Activated naive CD4-positive, alpha-beta T cell treated with anti-CD3 and anti-CD28 coated beads for 36 hours (primary cell): ENCODE measurements at regions of chr19 and their contacts with region 1.

Region 1: GRCh38 chr19:17496337-17496997 is 15.0 kb upstream of the PGLS start:
- DNase-seq: peak; percentile 89
- H3K4me3 Mint-ChIP-seq: no peak overlapping the region
- H3K27ac Mint-ChIP-seq: no peak overlapping the region
- H3K4me1 Mint-ChIP-seq: peaks cover 15% of the 10 kb centered on the region
- H3K27me3 Mint-ChIP-seq: no peaks in the 10 kb centered on the region

Region 2: GRCh38 chr19:17479325-17479791 is 17.1 kb before region 1 on chr19:
- CTCF ChIA-PET with region 1: interaction called, 13 read pairs
- intact Hi-C with region 1: no loop called
- DNase-seq: no peak
- H3K4me3 Mint-ChIP-seq: no peak overlapping the region
- H3K27ac Mint-ChIP-seq: no peak overlapping the region
- H3K4me1 Mint-ChIP-seq: no peaks in the 10 kb centered on the region
- H3K27me3 Mint-ChIP-seq: no peaks in the 10 kb centered on the region

Region 3: GRCh38 chr19:17522988-17523872 is 26.8 kb after region 1 on chr19:
- CTCF ChIA-PET with region 1: interaction called, 10 read pairs
- intact Hi-C with region 1: no loop called
- DNase-seq: peak; percentile 83
- H3K4me3 Mint-ChIP-seq: no peak overlapping the region
- H3K27ac Mint-ChIP-seq: peak overlapping the region; percentile 85
- H3K4me1 Mint-ChIP-seq: peaks cover 15% of the 10 kb centered on the region
- H3K27me3 Mint-ChIP-seq: no peaks in the 10 kb centered on the region

Region 4: GRCh38 chr19:17555480-17555928 is 59.0 kb after region 1 on chr19 and contains the start of gene COLGALT1:
- CTCF ChIA-PET with region 1: interaction called, 8 read pairs
- intact Hi-C with region 1: loop called (anchors 5 kb)
- DNase-seq: peak; percentile 99
- H3K4me3 Mint-ChIP-seq: peak within 1 kb of the TSS; percentile 74
- H3K27ac Mint-ChIP-seq: no peak within 1 kb of the TSS
- H3K4me1 Mint-ChIP-seq: peaks cover 16% of the 10 kb centered on the region
- H3K27me3 Mint-ChIP-seq: no peaks in the 10 kb centered on the region
- total RNA-seq, gene COLGALT1: 36.8 to 37.3 TPM

Region 5: DNA sequence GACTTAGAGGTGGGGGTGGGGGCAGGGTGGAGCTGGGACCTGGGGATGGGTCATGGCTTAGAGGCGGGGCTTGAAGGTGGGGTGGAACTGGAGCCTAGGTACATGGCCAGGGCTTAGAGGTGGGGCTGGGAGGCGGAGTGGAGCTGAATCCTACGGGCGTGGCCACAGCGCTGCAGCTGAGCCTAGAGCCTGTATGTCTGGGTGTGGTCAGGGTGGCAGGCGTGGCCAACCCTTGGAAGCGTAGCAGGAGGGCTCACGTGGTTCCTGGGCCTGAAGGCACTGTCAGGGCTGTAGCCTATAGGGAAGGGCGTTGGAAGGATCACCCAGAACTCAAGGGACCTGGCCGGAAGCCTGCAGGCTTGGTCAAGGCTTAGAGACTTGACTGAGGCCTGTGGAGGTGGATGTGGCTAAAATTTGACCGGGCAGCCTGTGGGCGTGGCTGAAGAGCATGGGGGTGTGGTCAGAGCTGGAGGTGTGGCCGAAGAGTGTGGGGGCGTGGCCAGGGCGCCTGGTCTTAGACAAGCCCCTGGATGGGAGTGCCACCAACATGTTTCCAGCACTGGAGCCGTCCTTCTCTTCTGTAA is 83.3 kb after region 1 on chr19:
- CTCF ChIA-PET with region 1: interaction called, 5 read pairs
- intact Hi-C with region 1: loop called (anchors 1 kb)
- DNase-seq: no peak
- H3K4me3 Mint-ChIP-seq: no peak overlapping the region
- H3K27ac Mint-ChIP-seq: no peak overlapping the region
- H3K4me1 Mint-ChIP-seq: no peaks in the 10 kb centered on the region
- H3K27me3 Mint-ChIP-seq: no peaks in the 10 kb centered on the region